Adrenal gland (tissue), 19 donors: ENCODE measurements at regions of chr21 and their contacts with region 1.

Region 1: GRCh38 chr21:38920631-38921398 is 115.1 kb downstream of the ETS2 start:
- DNase-seq: peak in 1 of 7 donors; percentile 21
- H3K4me3 ChIP-seq: no peak overlapping the region
- H3K27ac ChIP-seq: peak overlapping the region in 3 of 5 donors; percentile 35 to 49 (median 44)
- H3K4me1 ChIP-seq: peaks cover 6 to 23% of the 10 kb centered on the region in 2 donors
- H3K27me3 ChIP-seq: no peaks in the 10 kb centered on the region
- CTCF ChIP-seq: no peak
- POLR2A ChIP-seq: no peak

Region 2: DNA sequence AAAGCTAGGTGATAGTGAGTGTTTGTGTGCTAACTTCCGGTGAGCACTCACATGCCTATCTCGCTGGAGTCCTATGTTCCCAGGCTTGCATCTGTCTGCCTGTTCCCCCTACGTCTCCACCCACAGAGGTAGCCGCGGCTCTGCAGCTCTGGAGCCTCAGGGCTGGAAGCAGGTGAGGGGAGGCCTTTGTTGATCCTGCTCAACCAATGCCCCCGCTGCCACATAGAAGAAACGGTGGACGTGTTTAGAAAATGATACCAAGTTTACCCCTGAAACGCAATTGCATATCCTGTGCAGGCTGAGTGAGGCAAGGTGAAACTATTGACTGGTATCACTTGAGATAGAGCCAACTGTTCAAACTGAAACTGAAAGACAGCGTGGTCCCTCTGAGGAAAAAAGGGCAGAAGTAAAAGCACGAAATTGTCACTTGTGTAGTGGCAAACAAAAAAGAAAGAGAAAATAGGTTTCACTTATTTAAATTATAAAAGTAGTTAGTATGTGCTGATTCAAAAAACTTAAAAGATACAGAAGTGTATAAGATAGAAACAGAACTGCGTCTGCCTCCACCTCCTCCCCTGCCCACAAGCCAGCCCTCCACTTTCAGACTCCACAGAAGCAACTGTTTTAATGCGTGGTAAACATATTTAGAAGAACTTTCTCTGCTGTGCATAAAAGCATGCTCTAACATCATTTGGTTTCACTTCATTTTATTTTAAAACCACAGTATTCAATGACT is 153.7 kb before region 1 on chr21:
- intact Hi-C with region 1: no loop called
- DNase-seq: no peak
- H3K4me3 ChIP-seq: no peak overlapping the region
- H3K27ac ChIP-seq: peak overlapping the region in 1 of 5 donors; percentile 19
- H3K4me1 ChIP-seq: no peaks in the 10 kb centered on the region
- H3K27me3 ChIP-seq: no peaks in the 10 kb centered on the region
- CTCF ChIP-seq: no peak
- POLR2A ChIP-seq: no peak

Region 3: DNA sequence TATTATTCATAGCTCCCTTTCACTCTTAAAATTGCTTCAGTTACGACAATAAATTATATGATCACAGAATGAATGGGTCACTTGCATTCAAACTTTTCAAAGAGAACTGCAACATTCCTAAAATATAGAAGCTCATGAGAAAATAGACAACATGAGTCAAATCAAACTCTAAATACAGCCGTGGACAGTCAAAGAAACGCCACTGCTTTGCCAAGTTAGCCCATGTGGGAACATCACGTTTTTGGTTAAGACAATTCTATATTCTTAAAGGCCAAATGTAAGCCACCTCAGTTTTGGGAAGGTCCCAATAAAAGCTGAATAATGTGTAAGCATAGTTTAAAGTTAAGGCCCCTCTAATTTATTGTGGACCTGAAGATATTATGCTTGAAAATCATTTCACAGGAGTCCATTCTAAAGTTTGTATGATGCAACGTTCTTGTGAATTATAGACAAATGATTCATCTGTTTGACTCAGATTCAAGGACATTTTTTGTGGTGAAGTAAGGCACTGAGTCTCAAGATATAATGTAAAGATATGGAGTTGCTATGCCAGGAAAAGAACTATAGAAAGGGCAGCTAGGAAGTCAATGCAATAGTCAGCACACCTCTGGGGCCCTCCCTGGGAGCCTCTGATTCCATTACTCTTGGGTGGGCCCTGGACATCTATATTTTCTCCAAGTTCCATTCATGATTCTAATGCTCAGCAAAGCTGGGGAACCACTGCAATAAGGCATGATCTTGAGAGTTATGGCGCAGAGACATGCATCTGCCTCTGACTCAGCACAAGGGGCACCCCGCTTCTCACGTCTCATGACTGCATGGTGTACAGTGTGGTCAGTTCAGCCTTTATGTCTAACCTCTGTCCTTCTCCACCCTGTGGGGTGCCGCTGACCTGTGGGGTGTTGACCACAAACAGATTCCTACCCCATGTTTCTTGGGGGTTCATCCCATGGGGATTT is 81.2 kb before region 1 on chr21:
- intact Hi-C with region 1: no loop called
- DNase-seq: no peak
- H3K4me3 ChIP-seq: no peak overlapping the region
- H3K27ac ChIP-seq: no peak overlapping the region
- H3K4me1 ChIP-seq: peaks cover 0 to 4% of the 10 kb centered on the region in 2 donors
- H3K27me3 ChIP-seq: no peaks in the 10 kb centered on the region
- CTCF ChIP-seq: no peak
- POLR2A ChIP-seq: no peak

Region 4: GRCh38 chr21:38861989-38862683 is 58.7 kb before region 1 on chr21:
- intact Hi-C with region 1: no loop called
- DNase-seq: no peak
- H3K4me3 ChIP-seq: no peak overlapping the region
- H3K27ac ChIP-seq: no peak overlapping the region
- H3K4me1 ChIP-seq: no peaks in the 10 kb centered on the region
- H3K27me3 ChIP-seq: no peaks in the 10 kb centered on the region
- CTCF ChIP-seq: no peak
- POLR2A ChIP-seq: no peak

Region 5: DNA sequence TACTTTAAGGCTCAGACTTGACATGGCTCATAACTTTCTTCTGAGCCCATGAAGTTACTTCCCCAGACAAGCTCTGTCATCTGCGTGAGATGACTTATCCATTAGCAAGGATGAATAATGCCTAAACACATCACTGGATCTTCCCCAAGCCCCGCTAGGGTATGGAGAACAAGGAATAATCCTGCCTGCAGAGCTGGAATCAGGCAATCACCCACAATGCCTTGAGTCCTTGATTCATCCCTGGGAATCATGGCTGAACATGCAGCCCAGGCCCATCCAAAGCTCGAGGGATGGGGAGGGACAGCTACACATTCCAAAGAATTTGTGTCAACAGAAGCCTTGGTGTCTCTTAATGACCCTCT is 130.8 kb after region 1 on chr21:
- intact Hi-C with region 1: no loop called
- DNase-seq: no peak
- H3K4me3 ChIP-seq: no peak overlapping the region
- H3K27ac ChIP-seq: no peak overlapping the region
- H3K4me1 ChIP-seq: no peaks in the 10 kb centered on the region
- H3K27me3 ChIP-seq: no peaks in the 10 kb centered on the region
- CTCF ChIP-seq: no peak
- POLR2A ChIP-seq: no peak

Region 6: GRCh38 chr21:39173716-39174680 is 253.2 kb after region 1 on chr21:
- intact Hi-C with region 1: loop called in 1 of 2 experiments (anchors 5 kb)
- DNase-seq: no peak
- H3K4me3 ChIP-seq: no peak overlapping the region
- H3K27ac ChIP-seq: no peak overlapping the region
- H3K4me1 ChIP-seq: no peaks in the 10 kb centered on the region
- H3K27me3 ChIP-seq: no peaks in the 10 kb centered on the region
- CTCF ChIP-seq: no peak
- POLR2A ChIP-seq: no peak